ENCODE measurements at regions of chr11 and their contacts with region 1.

Region 1: GRCh38 chr11:1333091-1333772 is 23.8 kb upstream of the TOLLIP start:
- DNase-seq: peak; percentile 60
- ATAC-seq: peak; percentile 71
- H3K4me3 ChIP-seq: peak overlapping the region in 2 of 3 experiments; percentile 42 to 51; a peak in 4 of 6 replicates
- H3K27ac ChIP-seq: no peak overlapping the region
- H3K4me1 ChIP-seq: peaks cover 39% of the 10 kb centered on the region
- H3K27me3 ChIP-seq: peaks cover 0 to 11% of the 10 kb centered on the region in 2 experiments; a peak in 1 of 5 replicates
- CTCF ChIP-seq: peak; percentile 7; the same call in 1 of the 2 replicates
- EP300 ChIP-seq: peak in 1 of 2 experiments; percentile 37; a peak in 1 of 4 replicates
- POLR2A ChIP-seq: no peak
- RAD21 ChIP-seq: no peak

Region 2: DNA sequence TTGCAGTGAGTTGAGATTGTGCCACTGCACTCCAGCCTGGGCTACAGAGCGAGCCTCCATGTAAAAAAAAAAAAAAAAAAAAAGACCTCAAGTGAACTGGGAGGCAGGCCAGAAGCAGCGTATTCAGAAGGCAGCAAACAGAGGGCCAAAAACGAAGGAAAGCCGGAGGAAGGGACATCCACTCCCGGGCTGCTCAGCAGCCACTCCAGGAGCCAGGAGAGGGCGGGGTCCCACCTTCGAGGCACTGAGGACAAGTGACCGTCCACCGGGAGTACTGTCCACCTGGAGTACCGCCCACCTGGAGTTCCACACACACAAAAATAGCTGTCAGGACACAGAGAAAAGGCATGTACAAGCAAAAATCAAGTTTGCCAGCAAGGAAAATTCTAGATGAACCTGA is 29.3 kb before region 1 on chr11:
- CTCF ChIA-PET with region 1: no interaction called
- POLR2A ChIA-PET with region 1: interaction called, 15 read pairs
- in situ Hi-C with region 1: no loop called
- intact Hi-C with region 1: no loop called
- DNase-seq: no peak
- ATAC-seq: peak; percentile 3; the same call in 1 of the 3 replicates
- H3K4me3 ChIP-seq: peak overlapping the region in 2 of 3 experiments; percentile 53 to 69; a peak in 3 of 6 replicates
- H3K27ac ChIP-seq: peak overlapping the region; percentile 95
- H3K4me1 ChIP-seq: peaks cover 92% of the 10 kb centered on the region
- H3K27me3 ChIP-seq: no peaks in the 10 kb centered on the region
- CTCF ChIP-seq: no peak
- EP300 ChIP-seq: no peak
- POLR2A ChIP-seq: no peak
- RAD21 ChIP-seq: no peak